AG04450 (cell line): ENCODE measurements at regions of chr10 and their contacts with region 1.

Region 1: GRCh38 chr10:68082872-68083271 is 7.8 kb upstream of the HERC4 start:
- DNase-seq: no peak
- H3K4me3 ChIP-seq: no peak overlapping the region
- H3K27ac ChIP-seq: no peak overlapping the region
- H3K27me3 ChIP-seq: no peaks in the 10 kb centered on the region
- CTCF ChIP-seq: peak; percentile 62

Region 2: GRCh38 chr10:67875340-67876238 is 207.3 kb before region 1 on chr10:
- CTCF ChIA-PET with region 1: no interaction called
- POLR2A ChIA-PET with region 1: no interaction called
- DNase-seq: no peak
- H3K4me3 ChIP-seq: no peak overlapping the region
- H3K27ac ChIP-seq: no peak overlapping the region
- H3K27me3 ChIP-seq: no peaks in the 10 kb centered on the region
- CTCF ChIP-seq: no peak

Region 3: DNA sequence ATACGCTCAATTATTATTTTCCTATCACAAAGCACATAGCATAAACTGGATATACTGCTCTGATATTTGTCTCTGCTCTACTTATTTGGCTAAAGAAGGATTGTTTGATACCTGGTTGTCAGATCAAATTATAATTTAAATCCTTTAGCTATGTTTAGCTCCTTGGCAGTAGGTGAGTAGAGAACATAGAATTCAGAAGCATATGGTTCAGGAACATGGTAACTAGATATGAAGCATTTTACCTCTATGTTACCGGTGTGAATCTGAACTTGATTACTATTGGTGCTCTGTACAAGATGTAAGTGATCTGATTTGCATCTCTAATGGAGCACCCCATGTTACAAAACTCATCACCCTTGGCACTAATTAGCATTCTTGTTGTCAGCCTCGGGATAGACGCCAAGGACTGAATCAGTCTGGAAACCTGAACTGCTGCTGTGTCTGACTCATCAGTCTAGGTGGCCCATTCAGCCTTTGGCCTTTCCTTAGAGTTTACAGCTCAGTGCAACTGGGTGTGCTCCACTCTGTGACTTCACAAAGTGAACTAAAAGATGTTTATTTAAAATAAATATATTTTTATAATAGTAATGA is 14.1 kb after region 1 on chr10:
- CTCF ChIA-PET with region 1: interaction called, 12 read pairs
- POLR2A ChIA-PET with region 1: no interaction called
- DNase-seq: no peak
- H3K4me3 ChIP-seq: no peak overlapping the region
- H3K27ac ChIP-seq: no peak overlapping the region
- H3K27me3 ChIP-seq: no peaks in the 10 kb centered on the region
- CTCF ChIP-seq: no peak

Region 4: DNA sequence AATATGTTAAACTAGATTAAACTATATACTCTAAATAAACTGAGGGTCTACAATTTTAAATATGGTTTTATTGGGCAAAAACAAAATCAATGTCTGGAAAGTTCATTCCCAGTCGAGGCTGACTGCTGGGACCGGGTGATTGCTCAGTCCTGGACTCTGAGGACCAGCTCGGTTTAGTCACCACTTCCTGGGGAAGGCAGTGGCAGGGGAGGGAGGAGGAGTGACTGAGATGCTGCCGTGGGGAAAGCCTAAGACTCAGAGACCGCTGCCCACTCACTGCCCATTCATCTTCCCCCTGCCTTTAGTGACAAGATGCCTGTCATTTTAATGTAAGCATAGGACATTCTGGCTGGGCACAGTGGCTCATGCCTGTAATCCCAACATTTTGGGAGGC is 120.1 kb after region 1 on chr10:
- CTCF ChIA-PET with region 1: interaction called, 37 read pairs
- POLR2A ChIA-PET with region 1: no interaction called
- DNase-seq: no peak
- H3K4me3 ChIP-seq: no peak overlapping the region
- H3K27ac ChIP-seq: peak overlapping the region; percentile 21
- H3K27me3 ChIP-seq: no peaks in the 10 kb centered on the region
- CTCF ChIP-seq: no peak

Region 5: DNA sequence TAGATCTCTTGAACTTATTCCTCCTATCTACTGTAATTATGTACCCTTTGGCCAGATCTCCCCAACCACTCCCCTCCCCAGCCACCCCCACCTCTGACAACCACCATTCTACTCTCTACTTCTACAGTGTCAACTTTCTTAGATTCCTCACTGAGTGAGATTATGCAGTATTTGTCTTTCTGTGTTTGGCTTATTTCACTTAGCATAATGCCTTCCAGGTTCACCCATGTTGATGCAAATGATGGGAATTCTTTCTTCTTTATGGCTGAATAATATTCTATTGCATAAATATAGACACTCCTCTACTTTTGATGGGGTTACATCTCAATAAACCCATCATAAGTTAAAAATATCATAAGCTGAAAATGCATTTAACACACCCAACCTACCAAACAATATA is 227.7 kb after region 1 on chr10:
- CTCF ChIA-PET with region 1: no interaction called
- POLR2A ChIA-PET with region 1: no interaction called
- DNase-seq: no peak
- H3K4me3 ChIP-seq: no peak overlapping the region
- H3K27ac ChIP-seq: no peak overlapping the region
- H3K27me3 ChIP-seq: no peaks in the 10 kb centered on the region
- CTCF ChIP-seq: no peak